CD8-positive, alpha-beta memory T cell (primary cell): ENCODE measurements at regions of chr5 and their contacts with region 1.

Region 1: GRCh38 chr5:57128325-57128724 is 45.5 kb upstream of the GPBP1 start:
- DNase-seq: no peak
- H3K4me3 ChIP-seq: no peak overlapping the region
- H3K4me3 Mint-ChIP-seq: no peak overlapping the region
- H3K27ac ChIP-seq: no peak overlapping the region
- H3K27ac Mint-ChIP-seq: no peak overlapping the region
- H3K4me1 ChIP-seq: no peaks in the 10 kb centered on the region
- H3K4me1 Mint-ChIP-seq: no peaks in the 10 kb centered on the region
- H3K27me3 ChIP-seq: no peaks in the 10 kb centered on the region
- H3K27me3 Mint-ChIP-seq: peaks cover 2% of the 10 kb centered on the region in 2 donors

Region 2: DNA sequence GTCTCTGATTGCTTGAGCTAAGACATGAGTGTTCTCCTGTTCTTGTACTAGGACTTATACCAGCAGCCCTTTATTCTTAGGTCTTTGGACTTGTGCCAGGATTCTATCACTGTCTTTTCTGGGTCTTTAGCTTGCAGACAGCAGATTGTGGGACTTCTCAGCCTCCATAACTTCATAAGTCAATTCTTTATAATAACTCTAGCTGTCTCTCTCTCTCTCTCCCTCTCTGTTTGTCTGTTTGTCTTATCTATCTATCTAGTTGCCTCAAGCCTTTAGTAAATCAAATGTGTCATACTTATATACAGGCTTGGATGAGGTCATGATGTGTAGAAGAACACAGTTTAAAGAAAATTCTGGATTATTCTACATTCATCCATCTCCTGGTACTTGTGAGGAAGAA is 883.7 kb before region 1 on chr5:
- CTCF ChIA-PET with region 1: no interaction called
- POLR2A ChIA-PET with region 1: interaction called, 10 read pairs
- DNase-seq: no peak
- H3K4me3 ChIP-seq: no peak overlapping the region
- H3K4me3 Mint-ChIP-seq: no peak overlapping the region
- H3K27ac ChIP-seq: no peak overlapping the region
- H3K27ac Mint-ChIP-seq: no peak overlapping the region
- H3K4me1 ChIP-seq: no peaks in the 10 kb centered on the region
- H3K4me1 Mint-ChIP-seq: no peaks in the 10 kb centered on the region
- H3K27me3 ChIP-seq: no peaks in the 10 kb centered on the region
- H3K27me3 Mint-ChIP-seq: peaks cover 3 to 7% of the 10 kb centered on the region in 2 donors